Left colon (tissue), 2 donors: ENCODE measurements at regions of chr5 and their contacts with region 1.

Region 1: DNA sequence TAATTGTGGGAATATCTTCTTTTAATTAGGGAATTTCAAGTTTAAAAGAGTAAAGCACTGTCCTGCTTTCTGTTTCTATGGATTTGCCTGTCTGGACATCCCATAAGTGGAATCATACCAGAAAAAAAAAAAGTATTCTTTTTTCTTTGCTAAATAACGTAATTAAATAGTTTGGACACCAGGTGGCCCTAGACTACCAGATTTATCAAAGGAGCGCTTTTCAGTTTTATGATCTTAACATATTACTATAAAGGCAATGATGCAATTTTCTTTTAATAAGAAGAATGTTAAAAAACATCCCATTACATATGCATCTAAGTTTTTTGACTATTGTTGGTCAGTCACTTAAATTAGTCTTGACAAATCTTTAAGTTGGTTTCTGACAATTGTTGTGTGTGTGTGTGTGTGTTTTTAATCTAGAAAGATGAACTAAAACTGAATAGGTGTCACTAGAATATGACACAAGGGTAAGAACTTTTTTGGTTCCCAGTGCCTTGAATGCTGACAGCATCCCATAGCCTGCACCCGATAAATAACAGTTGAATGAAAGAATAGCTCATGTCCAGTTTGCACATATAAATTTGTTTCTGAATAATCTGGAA is 49.5 kb downstream of the C5orf22 start:
- DNase-seq: no peak
- ATAC-seq: no peak

Region 2: DNA sequence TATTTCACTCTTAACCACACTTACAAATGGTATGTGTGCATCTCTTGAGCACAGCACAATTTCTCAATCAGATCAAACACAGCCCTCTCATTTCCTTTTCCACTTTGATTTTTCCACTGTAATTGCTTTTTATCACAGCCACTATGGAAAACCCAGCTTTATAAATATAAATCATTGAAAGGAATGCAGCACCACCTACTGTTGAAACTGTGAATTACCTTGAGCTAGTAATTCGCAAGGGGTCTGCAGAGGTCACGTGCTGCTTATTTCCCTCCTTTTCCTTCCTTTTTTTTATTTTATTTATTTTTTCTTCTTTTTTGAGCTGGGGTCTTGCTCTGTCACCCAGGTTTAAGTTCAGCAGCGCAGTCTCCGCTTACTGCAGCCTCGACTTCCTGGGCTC is 311.2 kb before region 1 on chr5:
- intact Hi-C with region 1: no loop called
- DNase-seq: no peak
- ATAC-seq: no peak

Region 3: DNA sequence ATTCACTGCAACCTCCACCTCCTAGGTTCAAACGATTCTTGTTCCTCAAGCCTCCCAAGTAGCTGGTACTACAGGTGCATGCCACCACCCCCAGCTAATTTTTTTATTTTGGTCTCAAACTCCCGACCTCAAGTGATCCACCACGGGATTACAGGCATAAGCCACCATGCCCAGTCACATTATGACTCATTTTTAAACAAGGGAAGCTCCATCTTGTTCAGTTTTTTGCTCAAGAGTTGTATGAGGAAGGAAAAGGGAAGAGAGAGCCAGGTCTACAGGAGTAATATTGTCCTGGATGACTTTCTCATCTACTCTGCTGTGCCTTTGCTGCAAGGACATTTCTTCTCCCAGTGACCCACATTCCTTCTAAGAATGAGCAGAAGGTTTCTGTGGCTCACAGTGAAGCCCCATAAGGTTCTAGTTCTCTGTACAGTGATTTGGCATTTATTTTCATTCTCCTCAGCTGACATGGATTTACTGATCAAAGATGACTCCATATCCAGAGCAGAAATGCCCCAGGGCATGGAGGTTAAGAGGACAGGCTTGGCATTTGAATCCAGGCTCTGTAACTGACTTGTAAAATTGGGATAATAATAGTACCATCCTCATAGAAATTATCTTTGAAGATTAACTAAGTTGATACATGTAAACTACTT is 234.6 kb before region 1 on chr5:
- intact Hi-C with region 1: no loop called
- DNase-seq: no peak
- ATAC-seq: no peak

Region 4: DNA sequence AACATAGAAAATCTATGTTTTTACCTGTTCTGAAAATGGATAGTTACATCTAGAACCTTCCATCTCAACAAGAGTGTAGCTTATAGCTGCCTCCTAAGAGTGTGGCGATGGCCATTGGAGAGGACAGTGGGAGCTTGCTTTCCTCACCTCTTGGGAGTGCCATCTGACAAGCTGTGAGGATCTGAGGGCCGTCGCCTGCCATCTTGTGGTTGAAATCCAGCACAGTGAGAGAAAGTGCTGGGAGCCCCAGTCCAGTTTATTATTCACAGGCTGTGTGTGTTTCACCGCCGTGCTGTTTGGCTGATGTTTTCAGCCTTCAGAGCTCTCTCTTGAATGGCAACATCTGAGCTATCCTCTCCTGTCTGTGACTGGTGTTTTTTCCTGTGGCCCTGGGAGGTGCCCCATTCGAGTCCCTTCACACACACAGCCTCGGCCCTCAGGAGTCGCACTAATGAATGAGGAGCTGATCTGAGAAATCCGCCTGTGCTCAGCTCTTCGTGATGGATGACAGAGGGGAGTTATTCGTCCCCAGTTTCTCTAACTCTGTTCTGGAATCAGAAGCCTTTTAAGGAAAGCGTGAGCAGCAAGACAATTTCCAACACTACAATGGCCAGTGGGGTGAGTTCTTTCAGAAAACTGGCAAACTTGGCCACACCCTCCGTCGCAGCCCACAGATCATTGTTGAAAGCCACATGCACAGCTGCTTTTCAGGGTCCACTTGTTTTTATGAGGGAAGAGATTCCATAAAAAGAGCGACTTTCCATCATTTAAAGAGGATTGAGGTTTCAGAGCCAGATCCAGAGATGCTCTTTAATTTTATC is 227.7 kb after region 1 on chr5:
- intact Hi-C with region 1: loop called in 1 of 2 experiments (anchors 5 kb)
- DNase-seq: peak; percentile 35 to 44
- ATAC-seq: peak; percentile 71

Region 5: GRCh38 chr5:31931605-31932241 is 350.1 kb after region 1 on chr5:
- intact Hi-C with region 1: no loop called
- DNase-seq: no peak
- ATAC-seq: no peak

Region 6: GRCh38 chr5:32076699-32077695 is 495.4 kb after region 1 on chr5:
- intact Hi-C with region 1: loop called in 1 of 2 experiments (anchors 10 kb)
- DNase-seq: peak in 1 of 2 donors; percentile 39
- ATAC-seq: no peak